ENCODE measurements at regions of chr6 and their contacts with region 1.

Region 1: GRCh38 chr6:150238336-150238741 is 95.5 kb downstream of the PPP1R14C start:
- DNase-seq: no peak
- ATAC-seq: peak; percentile 92

Region 2: DNA sequence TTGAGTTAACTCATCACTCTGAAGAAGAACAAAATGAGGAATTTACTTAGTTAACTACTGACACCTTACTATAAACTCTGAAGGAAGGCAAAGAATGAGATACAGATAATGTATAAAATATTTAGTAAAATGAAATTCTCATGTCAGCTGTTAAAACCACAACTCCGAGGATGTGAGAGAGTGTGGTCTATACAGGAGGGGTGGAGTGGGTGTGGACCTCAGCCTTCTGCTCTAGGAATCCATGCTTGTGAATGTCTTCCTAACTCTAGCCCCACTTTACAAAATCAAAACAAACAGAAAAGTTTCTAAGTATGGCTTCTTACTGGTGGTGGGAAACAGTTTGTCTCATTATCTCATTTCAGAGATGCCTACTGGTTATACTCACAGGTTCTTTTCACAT is 81.3 kb before region 1 on chr6:
- intact Hi-C with region 1: no loop called
- DNase-seq: no peak
- ATAC-seq: no peak

Region 3: GRCh38 chr6:150177952-150178520 is 60.3 kb before region 1 on chr6:
- intact Hi-C with region 1: loop called (anchors 5 kb)
- DNase-seq: no peak
- ATAC-seq: peak; percentile 58

Region 4: DNA sequence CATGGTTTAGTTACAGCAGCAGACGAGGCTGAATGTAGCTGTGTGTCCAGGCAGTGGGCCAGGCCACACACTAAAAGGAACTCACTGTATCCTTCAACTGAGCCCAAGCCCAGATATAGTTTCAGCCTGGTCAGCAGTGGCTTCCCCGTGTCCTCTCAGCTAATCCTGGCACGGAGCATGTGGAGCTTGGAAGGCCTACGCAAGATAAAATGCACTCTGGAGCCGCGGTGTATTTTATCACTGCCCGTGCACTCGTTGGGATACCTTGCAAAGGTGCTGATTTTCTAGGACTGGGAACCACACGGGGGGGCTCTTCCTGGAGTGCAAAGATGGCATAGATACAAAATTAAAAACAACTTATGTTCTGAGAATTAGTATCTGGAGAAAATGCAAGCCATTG is 82.1 kb after region 1 on chr6:
- intact Hi-C with region 1: loop called (anchors 5 kb)
- DNase-seq: peak; percentile 85
- ATAC-seq: peak; percentile 95

Measured in Right ventricle myocardium inferior (tissue), 1 donor.